ENCODE measurements at regions of chr3 and their contacts with region 1.

Region 1: DNA sequence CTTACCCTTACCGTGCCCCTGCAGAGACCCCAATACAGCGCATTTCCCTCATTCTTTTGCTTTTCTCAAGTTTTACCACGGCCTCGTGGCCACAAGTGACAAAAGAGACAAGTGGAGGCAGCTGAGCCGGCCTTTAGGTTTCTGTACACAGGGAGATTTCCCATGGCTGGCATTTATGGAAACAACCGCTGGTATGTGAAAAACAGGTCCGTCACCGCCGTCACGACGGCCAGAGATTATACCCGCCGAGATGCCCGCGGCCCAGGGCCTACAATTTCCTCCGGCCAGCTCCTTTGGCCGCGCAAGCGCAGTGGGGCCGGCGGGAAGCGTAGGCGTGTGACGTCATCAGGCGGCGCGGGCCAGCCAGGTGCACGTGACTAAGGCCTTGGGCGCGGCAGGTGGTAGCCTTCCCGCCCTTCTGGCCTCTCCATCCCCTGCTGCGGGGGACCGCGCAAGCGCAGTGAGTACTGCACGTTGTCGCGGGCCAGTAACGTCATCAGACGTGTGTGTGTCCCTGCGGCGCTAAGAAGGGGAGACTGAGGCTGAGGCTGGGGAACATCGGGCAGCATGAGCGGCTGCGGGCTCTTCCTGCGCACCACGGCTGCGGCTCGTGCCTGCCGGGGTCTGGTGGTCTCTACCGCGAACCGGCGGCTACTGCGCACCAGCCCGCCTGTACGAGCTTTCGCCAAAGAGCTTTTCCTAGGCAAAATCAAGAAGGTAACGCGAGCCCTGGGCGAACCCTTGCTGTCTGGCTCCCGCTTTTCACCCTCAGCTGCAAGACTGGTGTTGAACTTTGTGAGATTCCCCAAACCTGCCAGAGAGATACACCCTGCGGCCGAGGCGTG is at the start of gene ACAD9:
- DNase-seq: peak; percentile 97 to 99
- ATAC-seq: peak; percentile 91 to 96 (median 94)
- H3K4me3 ChIP-seq: peak within 1 kb of the TSS; percentile 93
- H3K27ac ChIP-seq: peak within 1 kb of the TSS; percentile 97
- H3K4me1 ChIP-seq: peaks cover 44% of the 10 kb centered on the region
- H3K27me3 ChIP-seq: no peaks in the 10 kb centered on the region
- CTCF ChIP-seq: no peak
- total RNA-seq, gene ACAD9: 23.9 to 47.8 (median 32.6) TPM

Region 2: GRCh38 chr3:128814519-128815317 is 64.6 kb before region 1 on chr3:
- intact Hi-C with region 1: loop called in 1 of 2 experiments (anchors 5 kb)
- DNase-seq: peak in 1 of 2 donors; percentile 63
- ATAC-seq: peak; percentile 92 to 95 (median 94)
- H3K4me3 ChIP-seq: no peak overlapping the region
- H3K27ac ChIP-seq: peak overlapping the region; percentile 79
- H3K4me1 ChIP-seq: peaks cover 51% of the 10 kb centered on the region
- H3K27me3 ChIP-seq: no peaks in the 10 kb centered on the region
- CTCF ChIP-seq: no peak

Region 3: GRCh38 chr3:128845778-128846485 is 33.4 kb before region 1 on chr3:
- intact Hi-C with region 1: loop called in 1 of 2 experiments (anchors 1 kb)
- DNase-seq: peak; percentile 88 to 96
- ATAC-seq: peak; percentile 94 to 97 (median 96)
- H3K4me3 ChIP-seq: peak overlapping the region; percentile 66
- H3K27ac ChIP-seq: peak overlapping the region; percentile 81
- H3K4me1 ChIP-seq: peaks cover 12% of the 10 kb centered on the region
- H3K27me3 ChIP-seq: no peaks in the 10 kb centered on the region
- CTCF ChIP-seq: peak; percentile 67

Measured in psoas muscle (tissue), 8 donors.